Panc1 (cell line): ENCODE measurements at regions of chr12 and their contacts with region 1.

Region 1: DNA sequence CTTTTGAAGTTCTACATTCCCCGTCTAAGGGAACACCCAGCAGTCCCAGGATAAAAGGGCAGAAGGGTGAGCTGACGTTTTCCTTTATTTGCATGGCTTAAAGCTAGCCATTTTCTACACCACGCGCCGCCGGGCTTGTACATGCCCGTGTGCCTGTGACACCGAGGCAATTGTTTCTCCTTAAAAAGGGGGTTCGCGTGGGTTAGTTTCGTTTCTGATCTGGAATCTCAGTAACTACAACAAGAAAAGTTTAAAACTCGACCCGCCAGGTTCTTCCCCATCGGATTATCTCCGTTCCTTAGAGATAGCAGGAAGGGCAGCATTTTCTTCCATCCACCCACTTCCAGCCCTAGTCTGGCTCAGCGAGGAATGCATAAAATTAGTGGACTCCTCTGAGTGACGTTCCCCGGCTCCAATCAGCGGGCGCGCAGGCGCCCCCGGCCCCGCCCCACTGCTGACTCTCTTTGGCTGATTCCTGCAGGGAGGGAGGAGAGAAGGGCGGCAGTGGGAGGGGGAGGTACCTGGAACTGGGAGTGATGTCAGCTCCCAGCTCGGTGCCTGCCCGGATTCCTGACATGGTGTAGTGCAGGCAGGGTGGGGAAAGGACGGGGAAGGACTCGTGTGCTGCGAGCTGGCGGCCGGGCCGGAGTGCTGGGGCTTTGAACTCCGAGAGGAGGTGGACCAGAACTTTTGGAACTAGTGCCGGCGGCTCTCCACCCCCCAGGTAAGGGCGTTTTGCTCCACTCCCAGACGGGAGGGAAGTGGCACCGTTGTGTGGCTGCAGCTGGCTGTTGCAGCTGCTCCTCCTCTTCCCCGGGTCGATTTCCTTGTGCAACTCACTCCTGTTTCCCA is at the start of gene PPFIBP1:
- DNase-seq: peak; percentile 99
- ATAC-seq: peak; percentile 98
- H3K4me3 ChIP-seq: peak within 1 kb of the TSS; percentile 68 to 87
- H3K27ac ChIP-seq: peak within 1 kb of the TSS; percentile 93
- H3K4me1 ChIP-seq: peaks cover 13% of the 10 kb centered on the region
- H3K27me3 ChIP-seq: no peaks in the 10 kb centered on the region
- CTCF ChIP-seq: peak; percentile 53
- total RNA-seq, gene PPFIBP1: 88.6 TPM

Region 2: DNA sequence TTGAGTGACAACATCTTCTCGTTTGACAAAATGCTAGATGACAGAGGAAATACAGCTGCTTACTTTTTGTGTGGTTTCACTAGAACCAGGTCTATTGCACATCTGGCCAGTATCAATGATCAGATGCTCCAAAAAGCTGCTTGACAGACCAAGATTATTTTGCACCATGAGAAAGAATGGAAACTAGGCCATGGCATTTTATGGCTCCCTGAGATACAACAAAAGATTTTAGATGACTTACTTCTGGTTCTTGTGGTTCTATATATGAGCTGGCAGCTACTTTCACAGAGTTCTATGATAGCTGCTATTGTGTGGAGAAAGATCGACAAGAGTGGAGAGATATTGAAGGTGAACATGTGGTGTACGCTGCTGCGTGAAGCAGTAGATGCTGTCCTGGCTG is 25.7 kb before region 1 on chr12:
- CTCF ChIA-PET with region 1: interaction called, 14 read pairs
- POLR2A ChIA-PET with region 1: no interaction called
- in situ Hi-C with region 1: no loop called
- intact Hi-C with region 1: no loop called
- DNase-seq: no peak
- ATAC-seq: no peak
- H3K4me3 ChIP-seq: no peak overlapping the region
- H3K27ac ChIP-seq: no peak overlapping the region
- H3K4me1 ChIP-seq: no peaks in the 10 kb centered on the region
- H3K27me3 ChIP-seq: no peaks in the 10 kb centered on the region
- CTCF ChIP-seq: no peak

Region 3: DNA sequence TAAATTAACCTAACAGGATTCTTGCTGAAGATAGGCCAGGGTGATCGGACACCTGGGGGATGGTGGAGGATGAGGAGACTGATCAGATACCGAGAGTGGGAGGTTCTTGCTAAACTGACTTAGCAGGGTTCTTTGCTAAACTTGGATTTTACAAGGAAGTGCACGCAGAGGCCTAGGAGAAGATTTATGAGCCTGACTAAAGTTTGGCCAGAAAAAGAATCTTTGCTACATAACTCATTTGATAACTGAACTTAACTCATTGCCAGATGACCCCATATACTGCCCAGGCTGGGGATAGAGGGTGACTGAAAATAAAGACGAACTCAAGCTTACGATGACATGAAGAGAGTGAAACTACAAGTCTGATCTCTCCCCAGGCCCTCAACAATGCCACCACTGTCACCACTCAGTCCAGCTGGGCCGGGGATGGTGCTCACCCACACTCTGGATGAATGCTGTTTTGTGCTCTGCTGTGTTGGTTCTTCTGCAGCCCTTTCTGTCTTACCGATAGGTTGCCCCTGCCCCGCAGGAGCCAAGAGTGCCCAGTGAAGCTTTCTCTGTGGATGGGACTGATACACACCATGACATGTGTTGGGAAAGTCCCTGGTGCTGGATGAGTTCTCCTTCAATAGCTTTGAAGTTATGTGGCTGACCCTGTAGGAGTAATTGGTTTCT is 29.2 kb after region 1 on chr12:
- CTCF ChIA-PET with region 1: no interaction called
- POLR2A ChIA-PET with region 1: no interaction called
- in situ Hi-C with region 1: no loop called
- intact Hi-C with region 1: loop called (anchors 2 kb)
- DNase-seq: no peak
- ATAC-seq: peak; percentile 58
- H3K4me3 ChIP-seq: peak overlapping the region; percentile 11 to 50
- H3K27ac ChIP-seq: peak overlapping the region; percentile 97
- H3K4me1 ChIP-seq: peaks cover 89% of the 10 kb centered on the region
- H3K27me3 ChIP-seq: no peaks in the 10 kb centered on the region
- CTCF ChIP-seq: no peak

Region 4: GRCh38 chr12:27602516-27602915 is 78.6 kb after region 1 on chr12:
- CTCF ChIA-PET with region 1: no interaction called
- POLR2A ChIA-PET with region 1: no interaction called
- in situ Hi-C with region 1: no loop called
- intact Hi-C with region 1: no loop called
- DNase-seq: no peak
- ATAC-seq: no peak
- H3K4me3 ChIP-seq: no peak overlapping the region
- H3K27ac ChIP-seq: no peak overlapping the region
- H3K4me1 ChIP-seq: peaks cover 12% of the 10 kb centered on the region
- H3K27me3 ChIP-seq: no peaks in the 10 kb centered on the region
- CTCF ChIP-seq: no peak

Region 5: DNA sequence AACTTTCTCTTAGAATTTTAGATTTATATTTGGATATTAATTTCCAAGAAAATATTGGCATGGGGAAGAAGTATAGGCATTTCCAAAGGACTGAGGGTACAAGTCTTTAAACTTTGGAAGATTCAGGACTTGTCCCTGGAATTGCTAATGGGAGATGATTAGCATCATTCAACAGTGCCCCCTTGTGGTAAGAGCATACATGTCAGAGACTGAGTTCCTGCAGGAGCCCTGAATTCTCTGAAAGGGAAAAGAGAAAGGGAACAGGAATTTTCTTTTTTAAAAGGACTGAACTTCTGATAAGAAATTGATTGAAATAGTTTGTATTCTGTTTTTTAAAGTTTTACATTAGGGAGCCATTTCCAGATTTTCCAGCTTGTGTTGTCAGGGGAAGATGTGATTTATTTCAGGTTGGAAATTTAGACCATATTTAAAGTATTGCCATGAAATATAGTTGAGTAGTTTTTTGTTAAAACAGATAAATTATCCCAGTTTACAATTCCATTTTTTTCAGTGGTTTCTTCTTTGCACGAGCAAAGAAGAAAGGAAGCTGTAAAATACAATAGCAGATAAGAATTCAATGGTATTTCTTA is 128.4 kb after region 1 on chr12:
- CTCF ChIA-PET with region 1: no interaction called
- POLR2A ChIA-PET with region 1: no interaction called
- in situ Hi-C with region 1: no loop called
- intact Hi-C with region 1: loop called (anchors 5 kb)
- DNase-seq: peak; percentile 69
- ATAC-seq: peak; percentile 95
- H3K4me3 ChIP-seq: no peak overlapping the region
- H3K27ac ChIP-seq: no peak overlapping the region
- H3K4me1 ChIP-seq: no peaks in the 10 kb centered on the region
- H3K27me3 ChIP-seq: no peaks in the 10 kb centered on the region
- CTCF ChIP-seq: peak; percentile 87; the same call in 1 of the 2 replicates